Activated CD8-positive, alpha-beta T cell treated with anti-CD3 and anti-CD28 coated beads for 36 hours (primary cell): ENCODE measurements at regions of chr18 and their contacts with region 1.

Region 1: GRCh38 chr18:48675352-48675761 is 136.5 kb downstream of the CTIF start:
- DNase-seq: peak; percentile 88
- ATAC-seq: peak; percentile 96
- H3K4me3 Mint-ChIP-seq: no peak overlapping the region
- H3K27ac Mint-ChIP-seq: no peak overlapping the region
- H3K4me1 Mint-ChIP-seq: peaks cover 2% of the 10 kb centered on the region
- H3K27me3 Mint-ChIP-seq: no peaks in the 10 kb centered on the region
- CTCF ChIP-seq: peak; percentile 87

Region 2: GRCh38 chr18:48735080-48735676 is 59.8 kb after region 1 on chr18:
- CTCF ChIA-PET with region 1: no interaction called
- POLR2A ChIA-PET with region 1: no interaction called
- intact Hi-C with region 1: no loop called
- DNase-seq: peak; percentile 12
- ATAC-seq: no peak
- H3K4me3 Mint-ChIP-seq: no peak overlapping the region
- H3K27ac Mint-ChIP-seq: no peak overlapping the region
- H3K4me1 Mint-ChIP-seq: peaks cover 4% of the 10 kb centered on the region
- H3K27me3 Mint-ChIP-seq: no peaks in the 10 kb centered on the region
- CTCF ChIP-seq: no peak

Region 3: DNA sequence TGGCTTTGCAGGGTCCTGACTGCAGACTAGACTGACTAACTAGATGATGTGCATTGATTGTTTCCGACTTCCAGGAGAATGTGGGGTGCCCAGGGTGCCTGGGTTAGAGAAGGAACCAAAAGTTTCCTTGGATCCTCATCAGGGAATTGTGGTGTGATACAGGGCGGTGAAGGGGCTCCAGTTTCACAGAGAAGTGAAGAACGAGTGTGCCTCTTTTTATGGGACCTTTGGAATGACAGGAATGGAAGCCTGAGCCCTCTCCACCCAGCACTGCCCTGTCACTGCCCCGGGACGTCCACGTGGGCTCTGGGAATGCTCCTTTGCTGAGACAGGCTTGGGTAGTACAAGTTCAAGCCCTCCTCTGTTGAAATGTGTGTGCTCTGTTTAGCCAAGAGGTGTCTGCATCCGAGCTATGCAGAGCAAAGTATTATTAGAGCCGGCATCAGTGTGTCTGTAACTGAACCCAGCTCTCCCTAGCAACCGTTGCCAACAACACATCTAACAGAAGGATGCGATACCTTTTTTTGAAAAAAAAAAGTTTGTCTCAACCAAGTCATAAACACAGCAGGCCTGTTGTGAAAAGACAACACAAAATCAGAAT is 91.8 kb after region 1 on chr18:
- CTCF ChIA-PET with region 1: no interaction called
- POLR2A ChIA-PET with region 1: no interaction called
- intact Hi-C with region 1: no loop called
- DNase-seq: no peak
- ATAC-seq: no peak
- H3K4me3 Mint-ChIP-seq: no peak overlapping the region
- H3K27ac Mint-ChIP-seq: no peak overlapping the region
- H3K4me1 Mint-ChIP-seq: no peaks in the 10 kb centered on the region
- H3K27me3 Mint-ChIP-seq: no peaks in the 10 kb centered on the region
- CTCF ChIP-seq: no peak

Region 4: DNA sequence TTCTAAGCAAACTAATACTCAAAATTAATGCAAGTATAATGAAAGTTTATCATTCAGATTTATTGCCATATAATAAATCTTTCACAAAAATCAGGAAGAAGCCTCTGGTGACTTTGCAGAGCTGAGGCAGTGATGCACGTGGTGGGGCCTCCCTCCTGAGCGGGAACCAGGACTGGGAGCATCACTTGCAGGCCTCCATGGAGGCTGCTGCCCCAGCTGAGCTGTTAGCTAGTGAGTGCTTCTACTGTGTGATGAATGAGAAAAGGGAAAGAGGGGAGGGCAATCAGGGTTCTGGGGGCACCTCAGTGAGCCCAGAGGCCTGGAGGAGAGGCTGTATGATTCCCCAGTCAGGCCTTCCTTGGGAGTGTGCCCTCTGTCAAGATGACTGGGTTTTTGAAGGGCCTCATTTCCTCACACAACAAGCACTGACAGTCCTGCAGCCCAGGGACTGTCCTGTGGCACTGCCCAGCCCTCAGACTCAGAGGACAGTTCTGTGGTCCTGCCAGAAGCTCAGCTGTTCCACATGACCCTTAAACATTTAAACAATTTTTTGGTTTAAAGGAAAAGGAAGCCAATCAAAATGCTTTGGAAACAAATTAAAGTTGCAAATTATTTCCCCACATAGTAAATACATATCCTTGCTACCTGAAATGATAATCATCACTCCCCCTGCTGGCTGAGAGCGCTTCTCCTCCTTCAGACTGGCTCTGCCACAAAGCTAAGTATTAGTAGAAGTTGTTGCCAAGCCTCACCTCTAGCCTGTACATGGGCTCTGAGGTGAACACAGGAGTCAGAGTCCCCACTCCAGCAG is 366.3 kb after region 1 on chr18:
- CTCF ChIA-PET with region 1: no interaction called
- POLR2A ChIA-PET with region 1: no interaction called
- intact Hi-C with region 1: loop called (anchors 10 kb)
- DNase-seq: peak; percentile 64
- ATAC-seq: peak; percentile 37
- H3K4me3 Mint-ChIP-seq: no peak overlapping the region
- H3K27ac Mint-ChIP-seq: peak overlapping the region; percentile 35
- H3K4me1 Mint-ChIP-seq: peaks cover 4% of the 10 kb centered on the region
- H3K27me3 Mint-ChIP-seq: no peaks in the 10 kb centered on the region
- CTCF ChIP-seq: peak; percentile 44

Region 5: GRCh38 chr18:49189772-49190171 is 514.4 kb after region 1 on chr18:
- CTCF ChIA-PET with region 1: no interaction called
- POLR2A ChIA-PET with region 1: no interaction called
- intact Hi-C with region 1: loop called (anchors 10 kb)
- DNase-seq: no peak
- ATAC-seq: no peak
- H3K4me3 Mint-ChIP-seq: no peak overlapping the region
- H3K27ac Mint-ChIP-seq: no peak overlapping the region
- H3K4me1 Mint-ChIP-seq: no peaks in the 10 kb centered on the region
- H3K27me3 Mint-ChIP-seq: no peaks in the 10 kb centered on the region
- CTCF ChIP-seq: no peak

Region 6: DNA sequence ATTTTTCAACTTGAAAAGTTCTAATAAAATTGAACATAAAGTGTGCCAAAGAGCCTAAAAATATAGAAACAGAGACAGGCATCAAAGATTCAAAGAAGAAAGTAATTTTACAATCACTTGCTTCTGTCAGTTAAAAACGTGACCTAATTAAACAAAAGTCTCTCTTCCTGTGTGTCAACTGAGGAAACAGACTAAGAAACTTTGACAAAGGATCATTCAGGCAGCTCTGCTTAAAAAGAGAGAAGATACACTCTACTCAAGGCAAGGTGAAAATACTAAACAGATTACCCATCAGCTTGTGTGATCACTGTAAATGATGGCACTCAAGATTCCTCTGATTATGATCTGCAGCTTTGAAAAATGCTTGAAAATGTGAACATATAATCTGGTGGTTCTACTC is 737.3 kb after region 1 on chr18:
- CTCF ChIA-PET with region 1: interaction called, 3 read pairs
- POLR2A ChIA-PET with region 1: no interaction called
- intact Hi-C with region 1: loop called (anchors 10 kb)
- DNase-seq: no peak
- ATAC-seq: no peak
- H3K4me3 Mint-ChIP-seq: peak overlapping the region; percentile 27
- H3K27ac Mint-ChIP-seq: peak overlapping the region; percentile 80
- H3K4me1 Mint-ChIP-seq: peaks cover 37% of the 10 kb centered on the region
- H3K27me3 Mint-ChIP-seq: no peaks in the 10 kb centered on the region
- CTCF ChIP-seq: no peak

Region 7: DNA sequence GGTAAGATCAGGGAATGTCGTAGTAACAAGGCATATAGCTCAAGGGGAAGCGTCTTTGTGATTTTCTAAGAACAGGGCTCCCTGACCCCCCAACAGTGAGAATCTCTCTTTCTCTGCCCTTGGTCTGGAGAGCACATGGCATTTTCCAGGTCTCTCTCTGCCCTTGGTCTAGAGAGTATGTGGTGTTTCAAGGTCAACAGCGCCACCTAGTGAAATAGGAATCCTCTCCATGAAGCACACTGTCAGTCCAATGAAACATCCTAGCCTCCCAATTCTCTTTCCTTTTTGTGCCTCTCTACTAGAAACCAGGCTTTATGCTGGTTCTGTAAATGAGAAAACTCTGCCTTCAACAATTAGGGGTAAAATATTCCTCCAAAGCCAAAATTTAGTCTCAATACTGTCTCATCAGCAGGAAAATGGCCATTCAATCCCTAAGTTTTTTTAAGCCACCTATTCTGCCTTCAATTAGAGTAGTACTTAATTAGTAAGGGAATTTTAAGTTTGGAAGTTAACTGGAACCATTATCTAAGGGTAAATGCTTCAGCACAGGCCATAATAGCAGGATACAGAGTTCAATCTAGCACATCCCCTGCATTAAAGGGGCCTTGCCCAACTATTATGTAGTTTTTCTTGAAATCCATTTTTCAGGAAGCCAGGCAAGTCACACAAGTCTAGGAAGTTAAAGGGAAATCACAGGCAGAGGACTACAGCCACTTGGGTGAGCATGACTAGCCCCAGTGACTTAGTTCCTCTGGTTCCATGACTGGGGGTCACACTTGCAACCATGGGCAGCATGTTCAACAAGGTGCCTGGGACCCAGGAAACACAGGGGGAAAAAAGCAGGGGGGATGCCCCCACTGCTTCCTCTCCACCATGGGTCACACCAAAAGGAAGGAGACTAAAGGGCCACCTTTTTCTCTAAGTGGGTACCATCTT is 772.7 kb after region 1 on chr18:
- CTCF ChIA-PET with region 1: interaction called, 6 read pairs
- POLR2A ChIA-PET with region 1: no interaction called
- intact Hi-C with region 1: loop called (anchors 10 kb)
- DNase-seq: peak; percentile 59
- ATAC-seq: peak; percentile 69
- H3K4me3 Mint-ChIP-seq: no peak overlapping the region
- H3K27ac Mint-ChIP-seq: no peak overlapping the region
- H3K4me1 Mint-ChIP-seq: peaks cover 7% of the 10 kb centered on the region
- H3K27me3 Mint-ChIP-seq: no peaks in the 10 kb centered on the region
- CTCF ChIP-seq: peak; percentile 76